HAP-1 (cell line): ENCODE measurements at regions of chr10 and their contacts with region 1.

Region 1: GRCh38 chr10:52740913-52741675 is 31.5 kb downstream of the MBL2 start:
- DNase-seq: peak in 1 of 2 experiments; percentile 71
- H3K4me3 ChIP-seq: no peak overlapping the region
- H3K4me1 ChIP-seq: no peaks in the 10 kb centered on the region
- H3K27me3 ChIP-seq: no peaks in the 10 kb centered on the region

Region 2: GRCh38 chr10:52308251-52309031 is 432.7 kb before region 1 on chr10:
- in situ Hi-C with region 1: loop called (anchors 25 kb)
- DNase-seq: peak; percentile 76 to 80
- H3K4me3 ChIP-seq: peak overlapping the region; percentile 17
- H3K4me1 ChIP-seq: peaks cover 7% of the 10 kb centered on the region
- H3K27me3 ChIP-seq: peaks cover 6% of the 10 kb centered on the region

Region 3: GRCh38 chr10:52410916-52411315 is 330.2 kb before region 1 on chr10:
- in situ Hi-C with region 1: no loop called
- DNase-seq: no peak
- H3K4me3 ChIP-seq: no peak overlapping the region
- H3K4me1 ChIP-seq: no peaks in the 10 kb centered on the region
- H3K27me3 ChIP-seq: no peaks in the 10 kb centered on the region

Region 4: GRCh38 chr10:53108317-53108934 is 367.3 kb after region 1 on chr10:
- in situ Hi-C with region 1: no loop called
- DNase-seq: no peak
- H3K4me3 ChIP-seq: no peak overlapping the region
- H3K4me1 ChIP-seq: no peaks in the 10 kb centered on the region
- H3K27me3 ChIP-seq: no peaks in the 10 kb centered on the region